IMR-90 (cell line): ENCODE measurements at regions of chr15 and their contacts with region 1.

Region 1: GRCh38 chr15:55649054-55649423 is 60.9 kb upstream of the PYGO1 start:
- DNase-seq: peak; percentile 80
- ATAC-seq: peak; percentile 94
- H3K4me3 ChIP-seq: no peak overlapping the region
- H3K27ac ChIP-seq: no peak overlapping the region
- H3K4me1 ChIP-seq: no peaks in the 10 kb centered on the region
- H3K27me3 ChIP-seq: no peaks in the 10 kb centered on the region
- CTCF ChIP-seq: no peak
- POLR2A ChIP-seq: no peak
- RAD21 ChIP-seq: no peak

Region 2: GRCh38 chr15:55221090-55222011 is 427.7 kb before region 1 on chr15:
- CTCF ChIA-PET with region 1: no interaction called
- POLR2A ChIA-PET with region 1: no interaction called
- dilution Hi-C with region 1: no loop called
- in situ Hi-C with region 1: loop called (anchors 10 kb)
- intact Hi-C with region 1: loop called (anchors 5 kb)
- DNase-seq: peak; percentile 96
- ATAC-seq: peak; percentile 84
- H3K4me3 ChIP-seq: peak overlapping the region; percentile 11; the same call in 1 of the 2 replicates
- H3K27ac ChIP-seq: peak overlapping the region; percentile 96
- H3K4me1 ChIP-seq: peaks cover 11% of the 10 kb centered on the region
- H3K27me3 ChIP-seq: no peaks in the 10 kb centered on the region
- CTCF ChIP-seq: no peak
- POLR2A ChIP-seq: peak; percentile 34; the same call in 1 of the 2 replicates
- RAD21 ChIP-seq: no peak

Region 3: GRCh38 chr15:55360256-55360655 is 288.8 kb before region 1 on chr15:
- CTCF ChIA-PET with region 1: no interaction called
- POLR2A ChIA-PET with region 1: no interaction called
- dilution Hi-C with region 1: no loop called
- in situ Hi-C with region 1: no loop called
- intact Hi-C with region 1: no loop called
- DNase-seq: no peak
- ATAC-seq: no peak
- H3K4me3 ChIP-seq: no peak overlapping the region
- H3K27ac ChIP-seq: no peak overlapping the region
- H3K4me1 ChIP-seq: peaks cover 5% of the 10 kb centered on the region
- H3K27me3 ChIP-seq: no peaks in the 10 kb centered on the region; the same call in 1 of the 2 replicates
- CTCF ChIP-seq: no peak
- POLR2A ChIP-seq: no peak
- RAD21 ChIP-seq: no peak

Region 4: GRCh38 chr15:55768727-55769126 is 119.7 kb after region 1 on chr15:
- CTCF ChIA-PET with region 1: interaction called, 11 read pairs
- POLR2A ChIA-PET with region 1: no interaction called
- dilution Hi-C with region 1: no loop called
- in situ Hi-C with region 1: no loop called
- intact Hi-C with region 1: no loop called
- DNase-seq: no peak
- ATAC-seq: no peak
- H3K4me3 ChIP-seq: no peak overlapping the region
- H3K27ac ChIP-seq: no peak overlapping the region
- H3K4me1 ChIP-seq: no peaks in the 10 kb centered on the region
- H3K27me3 ChIP-seq: peaks cover 7% of the 10 kb centered on the region
- CTCF ChIP-seq: no peak
- POLR2A ChIP-seq: no peak
- RAD21 ChIP-seq: no peak

Region 5: DNA sequence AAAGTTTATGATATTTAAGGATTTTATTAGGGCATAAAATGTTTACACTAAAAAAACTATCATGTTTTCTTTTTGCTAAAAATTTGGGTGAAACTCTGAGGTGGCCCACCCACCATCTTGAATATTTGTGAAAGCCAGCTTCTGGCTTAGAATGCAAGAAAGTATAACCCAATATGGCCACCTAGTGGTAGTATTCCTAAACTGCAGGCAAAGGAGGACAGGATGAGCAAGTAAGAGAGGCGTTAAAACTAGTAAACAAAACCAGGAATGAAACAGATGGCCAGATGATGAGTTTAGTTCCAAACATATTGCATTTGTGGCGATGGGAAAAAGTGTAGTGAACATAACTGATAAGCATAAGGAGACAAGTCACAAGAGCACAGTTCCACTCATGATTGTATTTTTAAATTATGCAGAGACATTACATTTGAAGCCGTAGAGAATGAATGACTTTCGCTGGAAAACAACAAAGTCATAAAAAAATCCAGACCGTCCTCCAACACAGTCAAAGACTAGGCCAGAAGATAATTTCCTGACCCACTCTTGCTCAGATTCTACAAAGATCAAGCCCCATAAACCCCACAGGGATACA is 197.2 kb after region 1 on chr15:
- CTCF ChIA-PET with region 1: interaction called, 5 read pairs
- POLR2A ChIA-PET with region 1: no interaction called
- dilution Hi-C with region 1: no loop called
- in situ Hi-C with region 1: no loop called
- intact Hi-C with region 1: loop called (anchors 1 kb)
- DNase-seq: peak; percentile 88
- ATAC-seq: peak; percentile 97
- H3K4me3 ChIP-seq: no peak overlapping the region
- H3K27ac ChIP-seq: no peak overlapping the region
- H3K4me1 ChIP-seq: no peaks in the 10 kb centered on the region
- H3K27me3 ChIP-seq: no peaks in the 10 kb centered on the region
- CTCF ChIP-seq: peak; percentile 87
- POLR2A ChIP-seq: no peak
- RAD21 ChIP-seq: peak; percentile 68

Region 6: GRCh38 chr15:55917881-55918296 is 268.9 kb after region 1 on chr15:
- CTCF ChIA-PET with region 1: interaction called, 4 read pairs
- POLR2A ChIA-PET with region 1: no interaction called
- dilution Hi-C with region 1: no loop called
- in situ Hi-C with region 1: loop called (anchors 10 kb)
- intact Hi-C with region 1: loop called (anchors 1 kb)
- DNase-seq: peak; percentile 96
- ATAC-seq: peak; percentile 89
- H3K4me3 ChIP-seq: no peak overlapping the region
- H3K27ac ChIP-seq: no peak overlapping the region
- H3K4me1 ChIP-seq: no peaks in the 10 kb centered on the region
- H3K27me3 ChIP-seq: no peaks in the 10 kb centered on the region
- CTCF ChIP-seq: peak; percentile 86
- POLR2A ChIP-seq: no peak
- RAD21 ChIP-seq: peak; percentile 71

Region 7: DNA sequence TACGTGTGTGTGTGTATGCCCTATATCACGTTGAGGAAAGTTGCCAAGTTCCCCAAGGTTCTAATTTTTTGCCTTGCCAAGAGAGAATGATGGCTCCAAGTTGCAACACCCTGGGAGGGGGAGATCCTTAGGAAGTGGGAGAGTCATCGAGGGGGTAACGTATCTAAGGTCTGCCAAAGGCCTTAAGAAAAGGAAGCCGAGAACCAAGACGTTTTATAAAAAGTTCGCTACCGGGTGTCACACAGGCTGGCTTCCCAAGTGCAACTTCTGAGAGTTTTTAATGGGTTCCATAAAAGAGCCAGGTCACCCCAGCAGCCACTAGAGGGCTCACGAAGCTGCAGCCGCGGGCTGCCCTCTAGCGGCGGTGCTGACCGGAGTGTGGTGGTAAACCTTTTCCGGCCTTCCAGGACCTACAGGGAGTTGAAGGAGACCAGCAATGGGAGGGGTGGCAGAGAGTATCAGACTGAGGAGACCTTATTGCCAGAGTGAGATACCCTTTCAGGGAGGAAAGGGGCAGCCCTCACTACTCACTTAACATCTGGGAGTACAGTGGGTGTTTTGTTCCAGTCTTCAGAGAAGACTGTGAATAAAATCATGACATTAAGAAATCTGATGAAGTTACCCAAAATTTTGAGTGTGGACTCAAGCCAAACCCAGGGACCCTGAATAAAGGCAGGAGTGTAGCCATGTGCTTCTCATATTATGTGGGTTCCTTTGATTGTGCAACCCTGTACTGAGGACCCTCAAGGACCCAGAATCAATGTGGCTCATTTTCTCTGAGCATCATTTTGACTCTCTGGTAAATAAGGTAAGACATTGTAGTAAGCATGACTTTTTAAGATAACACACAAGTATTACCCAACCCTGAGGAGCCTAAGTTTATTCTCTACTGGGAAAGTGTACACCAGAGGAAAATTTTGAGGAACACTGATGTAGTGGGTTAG is 597.1 kb after region 1 on chr15:
- CTCF ChIA-PET with region 1: no interaction called
- POLR2A ChIA-PET with region 1: no interaction called
- dilution Hi-C with region 1: no loop called
- in situ Hi-C with region 1: no loop called
- intact Hi-C with region 1: loop called (anchors 2 kb)
- DNase-seq: peak; percentile 83
- ATAC-seq: peak; percentile 50
- H3K4me3 ChIP-seq: peak overlapping the region; percentile 21; the same call in 1 of the 2 replicates
- H3K27ac ChIP-seq: no peak overlapping the region
- H3K4me1 ChIP-seq: peaks cover 4% of the 10 kb centered on the region
- H3K27me3 ChIP-seq: no peaks in the 10 kb centered on the region
- CTCF ChIP-seq: peak; percentile 100; the same call in 1 of the 2 replicates
- POLR2A ChIP-seq: no peak
- RAD21 ChIP-seq: peak; percentile 78